A549 (cell line): ENCODE measurements at regions of chr13 and their contacts with region 1.

Region 1: GRCh38 chr13:27953676-27954405 is 15.3 kb downstream of the CDX2 start:
- DNase-seq: peak; percentile 57 to 82
- ATAC-seq: peak; percentile 94 to 98
- H3K4me3 ChIP-seq: peak overlapping the region; percentile 60
- H3K27ac ChIP-seq: peak overlapping the region; percentile 92 to 99
- H3K4me1 ChIP-seq: 0 out of 3 replicates have a peak, but pooled peaks cover 2% of the 10 kb centered on the region
- CTCF ChIP-seq: peak; percentile 76
- EP300 ChIP-seq: no peak
- POLR2A ChIP-seq: no peak
- RAD21 ChIP-seq: peak; percentile 44 to 76

Region 2: DNA sequence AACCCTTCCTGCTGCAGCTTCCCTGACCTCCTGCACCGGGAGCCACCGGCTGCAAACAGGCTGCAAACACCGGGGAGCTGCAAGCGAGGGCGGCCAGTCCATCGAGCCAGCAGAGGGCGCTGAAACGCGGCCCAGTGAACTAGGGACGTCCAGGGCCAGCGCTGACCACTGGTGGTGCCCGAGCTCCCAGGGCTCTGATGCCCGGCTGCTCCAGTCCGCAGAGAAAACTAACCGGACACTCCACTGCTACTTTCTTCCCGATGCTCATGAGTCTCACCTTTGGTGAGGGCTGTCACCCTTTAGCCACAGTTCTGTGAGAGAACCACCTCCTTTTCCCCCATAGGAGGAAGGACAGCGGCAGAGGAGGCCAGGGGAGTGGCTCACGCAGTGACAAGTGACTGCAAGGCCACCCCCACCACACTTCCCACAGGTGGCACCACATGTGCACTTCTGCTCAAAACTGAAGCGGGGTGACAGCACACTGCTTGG is 420.6 kb before region 1 on chr13:
- CTCF ChIA-PET with region 1: interaction called, 18 read pairs
- POLR2A ChIA-PET with region 1: no interaction called
- DNase-seq: peak; percentile 41 to 76
- ATAC-seq: peak; percentile 99 to 100
- H3K4me3 ChIP-seq: peak overlapping the region; percentile 41
- H3K27ac ChIP-seq: no peak overlapping the region
- H3K4me1 ChIP-seq: no peaks in the 10 kb centered on the region
- CTCF ChIP-seq: peak; percentile 75
- EP300 ChIP-seq: no peak
- POLR2A ChIP-seq: no peak
- RAD21 ChIP-seq: peak; percentile 68 to 73

Region 3: DNA sequence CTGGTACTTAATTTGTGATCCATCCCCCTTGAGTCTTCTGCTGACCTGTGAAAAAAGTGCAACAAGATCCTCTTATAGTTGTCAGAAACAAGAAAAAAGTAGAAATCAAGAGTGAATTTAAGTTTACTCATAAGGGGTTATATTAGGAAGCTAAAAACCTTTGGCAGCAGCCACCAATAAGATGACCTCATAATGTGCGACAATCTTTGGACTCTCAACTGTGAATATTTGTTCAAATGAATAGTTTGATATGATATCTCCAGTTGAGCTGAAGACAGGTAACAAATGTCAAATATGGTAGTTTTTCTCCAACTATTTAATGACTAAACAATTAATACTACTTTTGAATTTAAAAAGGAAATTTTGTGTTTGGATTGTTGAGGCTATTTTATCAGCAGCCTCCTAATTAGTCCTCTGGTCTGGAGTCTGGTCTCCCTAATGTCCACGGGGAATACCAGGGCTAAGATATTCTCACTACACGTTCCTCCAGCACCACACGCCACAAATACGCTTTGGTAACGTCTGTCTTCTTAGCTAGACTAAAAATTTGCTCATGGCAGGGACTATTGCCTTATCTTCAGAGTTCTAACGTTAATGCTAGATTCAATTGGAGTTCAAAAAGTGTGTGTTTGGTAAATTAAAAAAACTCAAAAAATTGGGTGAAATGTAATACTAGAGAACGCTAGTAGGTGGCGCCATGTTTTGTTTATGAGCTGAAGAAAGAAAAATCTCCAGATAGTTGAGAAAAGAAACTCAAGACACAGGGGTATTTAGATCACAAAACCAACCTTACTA is 85.0 kb before region 1 on chr13:
- CTCF ChIA-PET with region 1: interaction called, 22 read pairs
- POLR2A ChIA-PET with region 1: interaction called, 4 read pairs
- DNase-seq: peak in 1 of 2 experiments; percentile 7
- ATAC-seq: no peak
- H3K4me3 ChIP-seq: no peak overlapping the region
- H3K27ac ChIP-seq: no peak overlapping the region
- H3K4me1 ChIP-seq: no peaks in the 10 kb centered on the region
- CTCF ChIP-seq: peak; percentile 45
- EP300 ChIP-seq: no peak
- POLR2A ChIP-seq: no peak
- RAD21 ChIP-seq: peak; percentile 26 to 28; a peak in 2 of 5 replicates

Region 4: GRCh38 chr13:27928805-27929753 is 24.8 kb before region 1 on chr13:
- CTCF ChIA-PET with region 1: interaction called, 11 read pairs
- POLR2A ChIA-PET with region 1: interaction called, 3 read pairs
- DNase-seq: no peak
- ATAC-seq: no peak
- H3K4me3 ChIP-seq: no peak overlapping the region
- H3K27ac ChIP-seq: no peak overlapping the region
- H3K4me1 ChIP-seq: no peaks in the 10 kb centered on the region
- CTCF ChIP-seq: no peak
- EP300 ChIP-seq: no peak
- POLR2A ChIP-seq: no peak
- RAD21 ChIP-seq: no peak

Region 5: GRCh38 chr13:27977476-27978300 is 23.8 kb after region 1 on chr13:
- CTCF ChIA-PET with region 1: interaction called, 32 read pairs
- POLR2A ChIA-PET with region 1: no interaction called
- DNase-seq: peak in 1 of 2 experiments; percentile 29
- ATAC-seq: peak; percentile 27 to 68; a peak in 3 of 6 replicates
- H3K4me3 ChIP-seq: peak overlapping the region; percentile 31; the same call in 2 of the 3 replicates
- H3K27ac ChIP-seq: no peak overlapping the region
- H3K4me1 ChIP-seq: no peaks in the 10 kb centered on the region; the same call in 2 of the 3 replicates
- CTCF ChIP-seq: no peak
- EP300 ChIP-seq: no peak
- POLR2A ChIP-seq: no peak
- RAD21 ChIP-seq: no peak